CD4-positive, alpha-beta memory T cell (primary cell): ENCODE measurements at regions of chr14 and their contacts with region 1.

Region 1: GRCh38 chr14:89027097-89027740 is 202.8 kb downstream of the TTC8 start:
- DNase-seq: peak; percentile 46 to 65 (median 57)
- H3K4me3 ChIP-seq: peak overlapping the region; percentile 17 to 42
- H3K4me3 Mint-ChIP-seq: peak overlapping the region; percentile 52 to 76 (median 68)
- H3K27ac ChIP-seq: no peak overlapping the region
- H3K27ac Mint-ChIP-seq: no peak overlapping the region
- H3K4me1 ChIP-seq: peaks cover 11% of the 10 kb centered on the region
- H3K4me1 Mint-ChIP-seq: peaks cover 5 to 13% (median 9%) of the 10 kb centered on the region in 4 donors
- H3K27me3 ChIP-seq: peaks cover 15% of the 10 kb centered on the region
- H3K27me3 Mint-ChIP-seq: peaks cover 41 to 52% of the 10 kb centered on the region in 2 donors

Region 2: DNA sequence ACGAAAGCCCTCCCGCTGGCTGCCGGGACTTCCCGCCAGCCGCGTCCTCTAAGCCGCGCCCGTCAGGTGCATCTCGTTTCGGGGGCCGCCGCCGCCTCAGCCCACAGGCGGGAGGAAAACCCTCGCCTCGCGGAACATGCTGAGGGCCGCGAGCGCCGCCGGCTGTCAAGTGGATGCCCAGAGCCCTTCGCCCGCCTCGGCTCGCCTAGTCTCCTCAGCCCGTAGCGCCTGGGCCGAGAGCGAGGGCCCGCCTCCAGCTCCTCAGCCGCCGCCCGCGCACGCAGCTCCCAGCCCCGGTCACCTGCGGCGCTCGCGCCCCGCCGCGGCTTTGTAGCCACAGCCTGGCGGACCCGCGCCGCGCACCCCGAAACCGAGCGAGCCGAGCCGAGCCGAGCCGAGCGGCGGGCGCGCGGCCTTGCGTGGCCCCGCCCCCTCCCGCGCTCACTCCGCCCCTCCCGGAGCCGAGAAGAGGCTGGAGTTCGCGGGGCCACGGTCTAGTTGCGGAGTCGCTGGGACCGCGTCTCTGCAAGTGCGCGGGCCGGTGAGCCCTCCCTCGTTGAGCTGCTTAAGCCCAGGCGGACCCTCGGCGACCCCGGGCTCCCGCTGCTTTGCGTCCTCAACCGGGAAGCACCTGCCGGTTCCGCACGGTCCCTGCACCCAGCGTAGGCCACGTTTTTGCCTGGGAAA is 234.5 kb before region 1 on chr14 and contains the start of gene EML5:
- CTCF ChIA-PET with region 1: no interaction called
- POLR2A ChIA-PET with region 1: no interaction called
- intact Hi-C with region 1: no loop called
- DNase-seq: peak; percentile 82 to 86 (median 86)
- H3K4me3 ChIP-seq: peak within 1 kb of the TSS; percentile 57 to 86
- H3K4me3 Mint-ChIP-seq: peak within 1 kb of the TSS; percentile 87 to 93 (median 92)
- H3K27ac ChIP-seq: peak within 1 kb of the TSS; percentile 63
- H3K27ac Mint-ChIP-seq: peak within 1 kb of the TSS; percentile 77 to 91 (median 87)
- H3K4me1 ChIP-seq: peaks cover 22% of the 10 kb centered on the region
- H3K4me1 Mint-ChIP-seq: peaks cover 8 to 23% (median 13%) of the 10 kb centered on the region in 4 donors
- H3K27me3 ChIP-seq: no peaks in the 10 kb centered on the region
- H3K27me3 Mint-ChIP-seq: peaks cover 0 to 2% of the 10 kb centered on the region in 2 donors
- total RNA-seq, gene EML5: 5.5 to 5.6 TPM

Region 3: DNA sequence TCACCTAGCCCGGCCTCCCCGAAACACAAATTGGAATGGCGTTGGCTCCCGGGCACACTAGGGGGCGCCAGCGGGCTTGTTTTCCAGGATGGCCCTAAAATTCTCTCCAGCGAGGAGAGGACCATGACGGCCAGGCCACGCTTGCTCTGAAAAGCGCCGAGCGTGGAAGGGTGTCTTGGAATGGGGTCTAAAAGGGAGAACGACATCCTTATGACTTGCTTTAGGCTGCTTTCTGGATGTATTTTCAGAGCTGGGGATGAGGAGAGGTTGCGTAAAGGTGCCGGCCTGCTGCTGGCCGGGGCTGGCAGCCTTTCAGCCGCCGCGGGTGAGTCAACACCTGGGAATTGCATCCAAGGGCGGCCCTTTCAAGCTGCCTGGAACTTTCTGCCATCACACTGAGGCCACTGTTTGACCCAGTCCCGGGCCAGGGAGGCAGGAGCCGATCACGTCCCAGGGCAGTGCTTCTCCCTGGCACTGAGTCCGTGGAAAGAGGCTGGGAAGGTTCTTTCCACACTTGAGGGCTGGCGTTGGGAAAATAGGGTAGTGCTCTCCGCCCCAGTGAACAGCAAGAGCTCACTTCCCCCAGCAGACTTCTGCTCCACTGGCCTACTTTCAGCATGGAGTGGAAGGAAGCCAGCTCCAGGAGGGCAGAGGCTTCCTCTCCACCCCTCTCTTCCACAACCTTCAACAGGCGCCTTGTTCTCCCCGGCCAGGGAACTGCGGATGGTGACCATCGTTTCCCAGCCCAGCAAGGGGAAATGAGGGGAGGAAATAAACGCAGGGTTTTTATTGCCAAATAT is 13.4 kb after region 1 on chr14:
- CTCF ChIA-PET with region 1: interaction called, 12 read pairs
- POLR2A ChIA-PET with region 1: no interaction called
- intact Hi-C with region 1: no loop called
- DNase-seq: peak; percentile 67 to 74 (median 68)
- H3K4me3 ChIP-seq: no peak overlapping the region
- H3K4me3 Mint-ChIP-seq: peak overlapping the region; percentile 53 to 85 (median 78)
- H3K27ac ChIP-seq: no peak overlapping the region
- H3K27ac Mint-ChIP-seq: no peak overlapping the region
- H3K4me1 ChIP-seq: peaks cover 11% of the 10 kb centered on the region
- H3K4me1 Mint-ChIP-seq: peaks cover 4 to 9% (median 7%) of the 10 kb centered on the region in 4 donors
- H3K27me3 ChIP-seq: peaks cover 5% of the 10 kb centered on the region
- H3K27me3 Mint-ChIP-seq: peaks cover 12 to 14% of the 10 kb centered on the region in 2 donors

Region 4: DNA sequence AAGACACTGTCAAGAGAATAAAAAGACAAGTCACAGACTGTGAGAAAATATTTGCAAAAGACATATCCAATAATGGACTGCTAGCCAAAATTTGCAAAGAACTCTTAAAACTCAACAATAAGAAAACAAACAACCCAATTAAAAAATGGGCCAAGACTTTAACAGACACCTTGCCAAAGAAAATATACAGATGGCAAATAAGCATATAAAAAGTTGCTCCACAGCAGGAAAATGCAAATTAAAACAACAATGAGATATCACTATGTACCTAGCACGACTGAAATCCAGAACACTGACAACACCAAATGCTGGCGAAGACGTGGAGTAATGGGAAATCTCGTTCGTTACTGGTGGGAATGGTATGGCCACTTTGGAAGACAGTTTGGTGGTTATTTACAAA is 26.1 kb after region 1 on chr14:
- CTCF ChIA-PET with region 1: no interaction called
- POLR2A ChIA-PET with region 1: no interaction called
- intact Hi-C with region 1: no loop called
- DNase-seq: no peak
- H3K4me3 ChIP-seq: no peak overlapping the region
- H3K4me3 Mint-ChIP-seq: no peak overlapping the region
- H3K27ac ChIP-seq: no peak overlapping the region
- H3K27ac Mint-ChIP-seq: no peak overlapping the region
- H3K4me1 ChIP-seq: no peaks in the 10 kb centered on the region
- H3K4me1 Mint-ChIP-seq: peaks cover 0 to 4% (median 2%) of the 10 kb centered on the region in 4 donors
- H3K27me3 ChIP-seq: peaks cover 6% of the 10 kb centered on the region
- H3K27me3 Mint-ChIP-seq: peaks cover 0 to 2% of the 10 kb centered on the region in 2 donors

Region 5: DNA sequence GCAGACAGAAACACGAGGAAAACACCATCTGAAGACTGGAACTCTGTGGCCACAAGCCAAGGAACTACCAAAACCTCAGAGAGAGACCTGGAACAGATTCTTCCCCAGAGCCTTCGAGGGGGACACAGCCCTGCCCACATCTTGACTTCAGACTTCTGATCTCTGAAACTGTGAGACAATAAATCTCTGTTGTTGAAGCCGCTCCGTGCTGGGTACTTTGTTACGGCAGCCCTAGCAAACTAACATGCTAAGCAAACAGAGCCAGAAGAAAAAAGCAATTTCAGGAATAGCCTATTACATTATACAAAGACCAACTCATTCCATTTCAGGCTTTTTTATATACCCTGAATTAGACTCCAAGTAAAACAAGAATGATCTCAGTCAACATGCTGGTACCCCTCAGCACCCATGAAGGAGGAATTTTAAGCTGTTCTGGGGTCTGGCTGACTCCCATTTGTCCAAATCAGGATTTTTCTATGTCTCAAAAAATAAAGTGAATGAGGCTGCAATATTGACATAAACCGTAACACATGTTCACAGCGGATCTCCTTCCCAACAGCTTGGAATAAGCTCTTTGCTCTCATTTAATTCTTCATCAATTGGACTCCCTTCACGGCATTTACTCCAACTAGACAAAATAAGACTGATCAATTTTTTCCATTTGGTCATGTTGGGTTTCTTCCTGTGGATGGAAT is 199.7 kb after region 1 on chr14:
- CTCF ChIA-PET with region 1: no interaction called
- POLR2A ChIA-PET with region 1: no interaction called
- intact Hi-C with region 1: no loop called
- DNase-seq: no peak
- H3K4me3 ChIP-seq: no peak overlapping the region
- H3K4me3 Mint-ChIP-seq: no peak overlapping the region
- H3K27ac ChIP-seq: no peak overlapping the region
- H3K27ac Mint-ChIP-seq: peak overlapping the region in 3 of 7 donors; percentile 0 to 43 (median 18)
- H3K4me1 ChIP-seq: peaks cover 6% of the 10 kb centered on the region
- H3K4me1 Mint-ChIP-seq: peaks cover 36 to 67% (median 48%) of the 10 kb centered on the region in 4 donors
- H3K27me3 ChIP-seq: no peaks in the 10 kb centered on the region
- H3K27me3 Mint-ChIP-seq: no peaks in the 10 kb centered on the region

Region 6: GRCh38 chr14:89922031-89922907 is 895.0 kb after region 1 on chr14:
- CTCF ChIA-PET with region 1: interaction called, 21 read pairs
- POLR2A ChIA-PET with region 1: no interaction called
- intact Hi-C with region 1: no loop called
- DNase-seq: no peak
- H3K4me3 ChIP-seq: no peak overlapping the region
- H3K4me3 Mint-ChIP-seq: no peak overlapping the region
- H3K27ac ChIP-seq: no peak overlapping the region
- H3K27ac Mint-ChIP-seq: peak overlapping the region in 1 of 7 donors; percentile 21
- H3K4me1 ChIP-seq: no peaks in the 10 kb centered on the region
- H3K4me1 Mint-ChIP-seq: no peaks in the 10 kb centered on the region
- H3K27me3 ChIP-seq: no peaks in the 10 kb centered on the region
- H3K27me3 Mint-ChIP-seq: no peaks in the 10 kb centered on the region